HEK293 (cell line): ENCODE measurements at regions of chr5 and their contacts with region 1.

Region 1: GRCh38 chr5:76256116-76256889 is 146.8 kb upstream of the IQGAP2 start:
- H3K4me3 ChIP-seq: no peak overlapping the region
- H3K27ac ChIP-seq: no peak overlapping the region
- H3K4me1 ChIP-seq: no peaks in the 10 kb centered on the region
- CTCF ChIP-seq: peak; percentile 82

Region 2: DNA sequence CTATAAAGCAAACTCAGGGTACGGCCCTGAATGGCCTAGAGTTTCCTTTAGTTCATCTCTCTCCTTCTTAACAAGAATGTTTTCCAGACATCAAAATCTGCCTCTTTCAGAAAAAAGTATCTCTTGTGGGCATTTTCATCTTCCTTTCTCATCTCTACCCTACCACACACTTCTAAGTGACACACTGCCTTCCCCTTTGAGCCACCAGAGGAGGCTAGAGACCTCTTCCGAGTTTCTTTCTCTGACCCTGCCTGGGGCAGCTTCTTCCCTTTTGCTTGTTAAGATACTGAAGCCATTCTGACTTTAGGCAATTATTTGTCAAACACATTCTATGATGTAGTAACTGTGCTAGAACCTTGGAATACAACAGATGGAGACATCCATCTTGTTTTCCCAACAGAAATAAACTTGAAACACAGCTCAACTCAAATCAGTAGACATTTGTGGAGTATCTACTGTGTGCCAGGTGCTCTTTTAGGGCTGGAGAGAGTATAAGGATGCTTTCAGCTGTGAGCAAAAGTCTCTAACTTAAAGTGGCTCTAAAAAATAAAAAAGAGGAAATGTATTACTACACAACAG is 181.7 kb before region 1 on chr5:
- CTCF ChIA-PET with region 1: interaction called, 12 read pairs
- POLR2A ChIA-PET with region 1: no interaction called
- H3K4me3 ChIP-seq: no peak overlapping the region
- H3K27ac ChIP-seq: no peak overlapping the region
- H3K4me1 ChIP-seq: no peaks in the 10 kb centered on the region
- CTCF ChIP-seq: no peak

Region 3: DNA sequence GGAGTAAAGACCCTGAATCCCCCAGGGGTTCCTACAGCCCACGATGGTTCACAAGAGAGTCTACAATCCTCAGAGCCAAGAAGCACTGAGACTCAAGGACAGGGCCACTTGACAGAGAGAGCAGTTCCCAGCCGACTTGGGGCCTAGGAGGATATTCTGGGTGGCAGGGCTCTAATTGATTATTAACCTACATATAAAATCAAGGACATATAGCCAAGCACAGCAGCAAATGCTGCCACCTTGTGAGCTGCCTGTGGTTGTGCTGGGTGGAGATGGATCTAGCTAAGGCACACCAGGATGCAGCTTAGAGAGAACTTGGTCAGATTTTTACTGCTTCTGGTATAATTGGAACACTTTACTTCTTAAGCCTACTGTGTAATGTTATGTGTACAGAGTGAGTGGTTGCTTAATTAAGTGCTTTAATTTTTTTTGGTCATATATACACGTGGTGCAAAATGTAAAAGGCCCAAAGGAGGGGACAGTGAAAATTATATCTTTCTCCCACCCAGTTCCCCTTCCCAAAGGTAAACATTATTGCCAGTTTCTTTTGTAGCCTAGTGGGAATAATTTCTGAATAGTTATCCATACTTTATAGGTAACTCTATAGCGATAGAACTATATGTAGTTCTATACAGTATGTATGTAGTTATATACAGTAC is 288.1 kb after region 1 on chr5:
- CTCF ChIA-PET with region 1: interaction called, 13 read pairs
- POLR2A ChIA-PET with region 1: no interaction called
- H3K4me3 ChIP-seq: no peak overlapping the region
- H3K27ac ChIP-seq: no peak overlapping the region
- H3K4me1 ChIP-seq: peaks cover 6% of the 10 kb centered on the region; the same call in 1 of the 2 replicates
- CTCF ChIP-seq: peak; percentile 55; the same call in 1 of the 2 replicates